CD4-positive, alpha-beta memory T cell (primary cell): ENCODE measurements at regions of chr15 and their contacts with region 1.

Region 1: DNA sequence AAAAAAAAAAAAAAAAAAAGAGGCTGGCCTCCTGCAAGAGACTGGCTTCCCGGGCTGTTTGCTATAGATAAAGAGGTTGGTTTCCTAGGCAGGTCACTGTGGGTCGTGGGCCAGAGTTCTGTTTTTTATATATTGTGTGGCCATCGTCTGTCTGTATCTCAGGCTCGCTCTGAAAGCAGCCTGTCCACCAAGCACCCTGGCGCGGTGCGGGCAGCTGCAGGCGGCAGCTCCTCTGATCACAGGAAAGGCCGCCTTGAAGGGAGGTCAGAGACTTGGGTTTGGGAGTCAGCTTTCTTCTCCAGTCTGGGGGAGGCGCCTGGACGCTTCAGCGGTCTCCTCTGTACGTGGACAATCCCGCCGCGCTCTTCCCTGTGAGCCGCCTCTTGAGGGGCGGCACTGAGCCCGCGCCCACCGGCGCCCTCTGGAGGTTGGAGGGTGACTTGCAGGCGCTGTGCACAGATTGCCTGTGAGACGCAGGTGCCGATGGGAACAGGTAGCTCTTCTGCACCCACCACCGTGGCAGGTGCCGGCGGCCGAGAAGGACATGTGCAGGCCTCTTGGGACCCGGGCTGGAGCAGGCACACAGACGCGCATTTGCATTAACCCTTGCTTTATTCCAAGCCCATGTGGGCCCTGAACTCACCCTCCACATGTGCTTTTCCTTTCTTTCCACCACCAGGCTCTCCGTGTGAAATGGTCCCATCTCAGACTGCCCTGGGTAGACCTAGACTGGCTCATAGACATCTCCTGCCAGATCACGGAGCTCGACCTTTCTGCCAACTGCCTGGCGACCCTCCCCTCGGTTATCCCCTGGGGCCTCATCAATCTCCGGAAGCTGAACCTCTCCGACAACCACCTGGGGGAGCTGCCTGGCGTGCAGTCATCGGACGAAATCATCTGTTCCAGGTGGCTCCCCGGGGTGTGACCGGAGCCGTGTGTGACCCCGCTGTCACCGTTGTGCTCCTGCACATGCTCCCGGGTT is 89.3 kb downstream of the LRRK1 start:
- DNase-seq: peak; percentile 79 to 85 (median 81)
- H3K4me3 ChIP-seq: peak overlapping the region; percentile 53 to 70
- H3K4me3 Mint-ChIP-seq: peak overlapping the region; percentile 89 to 95 (median 91)
- H3K27ac ChIP-seq: no peak overlapping the region
- H3K27ac Mint-ChIP-seq: peak overlapping the region; percentile 22 to 80 (median 44)
- H3K4me1 ChIP-seq: peaks cover 14% of the 10 kb centered on the region
- H3K4me1 Mint-ChIP-seq: peaks cover 8 to 28% (median 16%) of the 10 kb centered on the region in 4 donors
- H3K27me3 ChIP-seq: no peaks in the 10 kb centered on the region
- H3K27me3 Mint-ChIP-seq: peaks cover 6 to 8% of the 10 kb centered on the region in 2 donors

Region 2: DNA sequence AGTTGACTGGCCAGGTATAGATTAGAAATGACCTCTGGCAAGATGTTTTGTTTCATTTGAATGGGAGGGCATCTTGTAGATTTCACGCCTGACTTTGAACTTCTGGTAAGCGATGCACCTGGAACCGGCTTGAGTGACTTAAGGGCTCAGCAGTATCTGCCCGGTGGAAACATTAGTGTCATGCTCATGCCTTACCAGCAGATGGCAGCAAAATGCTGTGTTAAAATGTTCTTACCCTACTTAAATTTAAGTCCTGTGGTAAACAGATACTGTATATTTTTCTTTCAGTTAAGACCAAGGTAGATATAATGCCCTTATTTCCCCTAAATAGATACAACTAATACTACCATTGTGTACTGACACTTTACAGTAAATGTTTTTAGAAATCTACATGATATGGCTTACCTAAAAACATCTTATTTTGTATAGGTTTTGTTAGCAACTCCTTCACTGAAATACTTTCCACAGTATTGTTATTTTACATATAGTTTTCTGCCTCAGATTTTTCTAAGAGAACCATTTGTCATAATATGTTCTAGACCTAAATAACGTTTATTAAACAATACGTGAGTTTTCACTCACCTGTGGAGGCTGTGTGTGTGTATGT is 380.6 kb before region 1 on chr15:
- CTCF ChIA-PET with region 1: interaction called, 21 read pairs
- POLR2A ChIA-PET with region 1: no interaction called
- intact Hi-C with region 1: loop called (anchors 1 kb)
- DNase-seq: peak; percentile 60 to 70 (median 64)
- H3K4me3 ChIP-seq: no peak overlapping the region
- H3K4me3 Mint-ChIP-seq: no peak overlapping the region
- H3K27ac ChIP-seq: no peak overlapping the region
- H3K27ac Mint-ChIP-seq: peak overlapping the region in 2 of 7 donors; percentile 64 to 68
- H3K4me1 ChIP-seq: no peaks in the 10 kb centered on the region
- H3K4me1 Mint-ChIP-seq: peaks cover 14 to 31% (median 23%) of the 10 kb centered on the region in 4 donors
- H3K27me3 ChIP-seq: no peaks in the 10 kb centered on the region
- H3K27me3 Mint-ChIP-seq: no peaks in the 10 kb centered on the region

Region 3: GRCh38 chr15:100759106-100759505 is 249.3 kb before region 1 on chr15:
- CTCF ChIA-PET with region 1: no interaction called
- POLR2A ChIA-PET with region 1: no interaction called
- intact Hi-C with region 1: no loop called
- DNase-seq: no peak
- H3K4me3 ChIP-seq: no peak overlapping the region
- H3K4me3 Mint-ChIP-seq: no peak overlapping the region
- H3K27ac ChIP-seq: no peak overlapping the region
- H3K27ac Mint-ChIP-seq: no peak overlapping the region
- H3K4me1 ChIP-seq: no peaks in the 10 kb centered on the region
- H3K4me1 Mint-ChIP-seq: no peaks in the 10 kb centered on the region
- H3K27me3 ChIP-seq: peaks cover 4% of the 10 kb centered on the region
- H3K27me3 Mint-ChIP-seq: peaks cover 20 to 24% of the 10 kb centered on the region in 2 donors

Region 4: DNA sequence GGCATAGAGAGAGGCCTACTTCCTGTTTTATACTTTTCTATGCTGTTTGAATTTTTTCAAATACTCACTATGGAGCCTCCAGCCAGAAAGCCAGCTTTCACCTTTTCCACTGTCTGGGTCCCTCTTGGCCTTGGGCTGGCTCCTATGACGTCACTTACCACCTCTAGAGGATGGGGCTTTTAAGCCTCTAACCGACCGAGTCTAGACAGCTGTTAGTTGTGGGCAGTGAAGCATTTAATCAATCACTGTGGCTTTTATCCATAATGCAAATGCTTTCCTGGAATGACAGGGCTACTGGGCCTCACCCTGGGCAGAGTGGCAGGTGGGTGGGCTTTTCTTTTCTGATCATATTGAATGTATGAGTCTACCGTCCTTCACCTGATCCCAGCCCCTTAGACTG is 27.4 kb before region 1 on chr15:
- CTCF ChIA-PET with region 1: interaction called, 19 read pairs
- POLR2A ChIA-PET with region 1: no interaction called
- intact Hi-C with region 1: no loop called
- DNase-seq: no peak
- H3K4me3 ChIP-seq: no peak overlapping the region
- H3K4me3 Mint-ChIP-seq: no peak overlapping the region
- H3K27ac ChIP-seq: no peak overlapping the region
- H3K27ac Mint-ChIP-seq: no peak overlapping the region
- H3K4me1 ChIP-seq: no peaks in the 10 kb centered on the region
- H3K4me1 Mint-ChIP-seq: no peaks in the 10 kb centered on the region
- H3K27me3 ChIP-seq: peaks cover 5% of the 10 kb centered on the region
- H3K27me3 Mint-ChIP-seq: peaks cover 8 to 19% of the 10 kb centered on the region in 2 donors

Region 5: DNA sequence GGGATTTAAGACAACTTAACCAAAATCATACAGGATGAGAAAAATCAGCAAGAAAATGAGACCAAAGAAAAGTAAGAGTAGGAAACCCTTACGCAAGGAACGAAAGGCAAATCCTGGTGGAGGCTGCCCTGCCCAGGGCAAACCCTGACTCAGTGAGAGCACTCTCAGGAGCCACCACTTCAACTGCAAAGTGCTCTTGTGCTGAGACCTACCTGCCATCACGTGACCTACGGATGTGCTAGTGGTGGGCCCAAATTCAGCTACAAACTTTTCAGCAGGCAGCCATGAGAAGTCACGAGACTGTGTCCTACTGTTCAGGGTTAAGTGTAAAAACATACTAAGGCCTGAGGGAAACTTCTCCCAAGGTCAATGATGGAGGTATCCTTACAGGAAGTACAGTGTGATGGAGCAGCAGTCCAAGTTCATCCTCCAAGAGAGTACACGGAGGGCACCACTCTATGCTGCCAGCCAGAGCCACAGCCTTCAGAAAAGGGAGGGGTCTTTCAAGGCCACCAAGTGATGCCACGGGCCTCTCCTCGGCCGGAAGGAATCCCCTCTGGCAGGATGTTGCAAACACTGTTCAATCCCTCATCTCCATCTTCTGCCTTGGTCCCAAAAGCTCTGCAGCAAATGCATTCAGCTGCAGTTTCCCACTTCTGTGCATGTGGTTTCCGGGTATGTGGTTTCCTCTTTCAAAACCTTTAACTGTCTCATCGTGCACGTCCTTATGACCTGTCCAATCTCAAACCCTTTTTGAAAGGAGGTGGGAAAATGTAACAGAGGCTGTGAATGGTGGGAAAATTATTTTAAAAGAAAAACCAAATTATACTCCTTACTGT is 233.9 kb after region 1 on chr15:
- CTCF ChIA-PET with region 1: interaction called, 17 read pairs
- POLR2A ChIA-PET with region 1: interaction called, 6 read pairs
- intact Hi-C with region 1: no loop called
- DNase-seq: peak; percentile 78 to 88 (median 80)
- H3K4me3 ChIP-seq: peak overlapping the region in 1 of 2 donors; percentile 57
- H3K4me3 Mint-ChIP-seq: peak overlapping the region; percentile 64 to 89 (median 80)
- H3K27ac ChIP-seq: peak overlapping the region; percentile 49
- H3K27ac Mint-ChIP-seq: peak overlapping the region; percentile 82 to 97 (median 89)
- H3K4me1 ChIP-seq: peaks cover 87% of the 10 kb centered on the region
- H3K4me1 Mint-ChIP-seq: peaks cover 67 to 96% (median 78%) of the 10 kb centered on the region in 4 donors
- H3K27me3 ChIP-seq: no peaks in the 10 kb centered on the region
- H3K27me3 Mint-ChIP-seq: no peaks in the 10 kb centered on the region

Region 6: GRCh38 chr15:101258238-101259144 is 250.0 kb after region 1 on chr15:
- CTCF ChIA-PET with region 1: interaction called, 17 read pairs
- POLR2A ChIA-PET with region 1: interaction called, 3 read pairs
- intact Hi-C with region 1: loop called (anchors 2 kb)
- DNase-seq: peak in 4 of 5 donors; percentile 49 to 61 (median 52)
- H3K4me3 ChIP-seq: no peak overlapping the region
- H3K4me3 Mint-ChIP-seq: no peak overlapping the region
- H3K27ac ChIP-seq: no peak overlapping the region
- H3K27ac Mint-ChIP-seq: peak overlapping the region in 1 of 7 donors; percentile 53
- H3K4me1 ChIP-seq: no peaks in the 10 kb centered on the region
- H3K4me1 Mint-ChIP-seq: peaks cover 0 to 3% (median under 1%) of the 10 kb centered on the region in 4 donors
- H3K27me3 ChIP-seq: no peaks in the 10 kb centered on the region
- H3K27me3 Mint-ChIP-seq: peaks cover 0 to 6% of the 10 kb centered on the region in 2 donors

Region 7: GRCh38 chr15:101277038-101277882 is 268.8 kb after region 1 on chr15 and contains the start of gene SELENOS:
- CTCF ChIA-PET with region 1: interaction called, 16 read pairs
- POLR2A ChIA-PET with region 1: no interaction called
- intact Hi-C with region 1: no loop called
- DNase-seq: peak; percentile 81 to 89 (median 85)
- H3K4me3 ChIP-seq: peak within 1 kb of the TSS; percentile 74 to 93
- H3K4me3 Mint-ChIP-seq: peak within 1 kb of the TSS; percentile 93 to 97 (median 94)
- H3K27ac ChIP-seq: peak within 1 kb of the TSS; percentile 89
- H3K27ac Mint-ChIP-seq: peak within 1 kb of the TSS; percentile 91 to 99 (median 96)
- H3K4me1 ChIP-seq: peaks cover 25% of the 10 kb centered on the region
- H3K4me1 Mint-ChIP-seq: peaks cover 11 to 43% (median 21%) of the 10 kb centered on the region in 4 donors
- H3K27me3 ChIP-seq: no peaks in the 10 kb centered on the region
- H3K27me3 Mint-ChIP-seq: no peaks in the 10 kb centered on the region
- total RNA-seq, gene SELENOS: 49.1 to 53.8 TPM